H1 (cell line): ENCODE measurements at regions of chr5 and their contacts with region 1.

Region 1: DNA sequence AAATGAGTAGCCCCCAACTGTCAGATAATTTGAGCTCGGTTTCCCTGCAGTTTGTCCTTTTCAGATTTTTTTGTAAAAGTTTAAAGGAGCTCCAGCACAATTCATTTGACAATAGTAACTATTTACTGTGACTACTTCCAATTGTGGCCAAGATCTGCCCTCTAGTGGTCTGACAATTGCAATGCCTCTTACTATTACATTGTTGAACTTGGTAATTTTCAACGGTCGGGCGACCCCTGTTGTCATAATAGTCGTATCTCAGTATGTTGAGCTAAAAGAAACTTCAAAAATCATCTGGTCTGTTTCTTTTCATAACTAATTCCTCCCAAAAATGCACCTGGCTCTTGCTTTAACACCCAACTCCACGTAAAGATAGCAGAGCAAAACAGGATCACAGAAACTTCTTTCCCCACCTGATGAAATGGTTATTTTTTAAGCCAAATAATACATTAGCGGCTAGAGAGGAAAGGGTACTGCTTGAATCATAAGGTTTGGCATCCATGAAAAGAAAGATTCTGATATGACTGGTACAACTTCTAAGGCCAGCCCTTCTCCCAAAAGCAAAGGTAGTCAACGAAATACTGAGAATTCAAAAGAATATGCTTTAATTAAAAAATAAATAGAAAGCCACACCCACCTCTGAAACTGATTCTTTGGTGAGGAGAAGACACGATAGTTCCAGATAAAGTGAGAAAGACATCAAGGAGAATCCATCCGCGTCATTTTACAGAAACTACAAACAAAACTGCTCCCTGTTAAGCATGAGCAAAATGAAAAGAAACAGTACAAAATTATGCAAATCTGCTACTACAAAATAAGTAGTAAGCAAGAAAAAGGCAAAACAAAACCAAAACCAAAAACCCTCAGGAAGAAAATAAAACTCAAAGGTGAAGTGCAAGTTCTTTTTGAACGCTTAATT is 76.9 kb upstream of the HTR4 start:
- DNase-seq: peak; percentile 34 to 54
- H3K4me3 ChIP-seq: no peak overlapping the region
- H3K27ac ChIP-seq: no peak overlapping the region
- H3K4me1 ChIP-seq: no peaks in the 10 kb centered on the region
- H3K27me3 ChIP-seq: no peaks in the 10 kb centered on the region
- CTCF ChIP-seq: peak in 2 of 3 experiments; percentile 92 to 98; a peak in 3 of 4 replicates
- EP300 ChIP-seq: no peak
- POLR2A ChIP-seq: no peak
- RAD21 ChIP-seq: peak; percentile 94 to 95

Region 2: DNA sequence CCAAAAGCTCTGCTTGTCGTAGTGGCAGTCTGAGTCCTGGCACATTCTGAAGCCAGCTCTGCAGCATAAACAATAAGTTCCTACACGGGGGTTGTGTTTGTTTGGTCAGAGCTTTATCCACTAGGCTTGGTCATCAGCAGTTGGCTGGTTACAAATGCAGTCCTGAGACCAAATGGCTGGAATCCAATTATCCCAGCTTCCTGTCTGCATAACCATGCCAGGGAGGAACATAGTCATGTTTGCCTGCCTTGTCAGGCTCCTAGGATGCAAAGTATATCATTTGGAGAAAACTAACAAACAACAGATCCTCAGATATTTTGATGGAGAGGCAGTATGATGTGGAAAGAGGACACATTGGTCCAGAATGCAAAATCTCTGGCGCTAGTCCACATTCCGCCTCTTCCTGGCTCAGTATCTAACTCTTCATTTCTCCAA is 261.7 kb before region 1 on chr5:
- CTCF ChIA-PET with region 1: interaction called, 14 read pairs
- POLR2A ChIA-PET with region 1: no interaction called
- DNase-seq: no peak
- H3K4me3 ChIP-seq: no peak overlapping the region
- H3K27ac ChIP-seq: no peak overlapping the region
- H3K4me1 ChIP-seq: no peaks in the 10 kb centered on the region
- H3K27me3 ChIP-seq: no peaks in the 10 kb centered on the region
- CTCF ChIP-seq: no peak
- EP300 ChIP-seq: no peak
- POLR2A ChIP-seq: no peak
- RAD21 ChIP-seq: no peak

Region 3: DNA sequence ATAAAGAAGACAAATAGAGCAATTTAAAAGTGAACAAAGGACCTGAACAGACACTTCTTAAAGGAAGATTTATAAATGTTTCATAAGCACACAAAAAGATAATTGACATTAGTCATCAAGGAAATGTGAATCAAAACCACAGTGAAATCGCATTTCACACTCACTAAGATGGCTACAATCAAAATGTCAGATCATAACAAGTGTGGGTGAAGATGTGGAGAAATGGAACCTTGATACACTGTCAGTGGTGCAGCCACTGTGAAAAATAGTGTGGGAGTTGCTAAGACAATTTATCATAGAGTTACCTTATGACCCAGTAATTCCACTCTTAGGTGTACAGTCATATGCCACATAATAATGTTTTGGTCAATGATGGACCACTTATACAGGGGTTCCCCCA is 22.3 kb before region 1 on chr5:
- CTCF ChIA-PET with region 1: interaction called, 23 read pairs
- POLR2A ChIA-PET with region 1: no interaction called
- DNase-seq: no peak
- H3K4me3 ChIP-seq: no peak overlapping the region
- H3K27ac ChIP-seq: no peak overlapping the region
- H3K4me1 ChIP-seq: no peaks in the 10 kb centered on the region
- H3K27me3 ChIP-seq: no peaks in the 10 kb centered on the region
- CTCF ChIP-seq: no peak
- EP300 ChIP-seq: no peak
- POLR2A ChIP-seq: no peak
- RAD21 ChIP-seq: no peak

Region 4: GRCh38 chr5:148844433-148845280 is 113.5 kb after region 1 on chr5:
- CTCF ChIA-PET with region 1: no interaction called
- POLR2A ChIA-PET with region 1: no interaction called
- DNase-seq: no peak
- H3K4me3 ChIP-seq: no peak overlapping the region
- H3K27ac ChIP-seq: no peak overlapping the region
- H3K4me1 ChIP-seq: no peaks in the 10 kb centered on the region
- H3K27me3 ChIP-seq: no peaks in the 10 kb centered on the region
- CTCF ChIP-seq: 0 out of 4 replicates have a peak, but pooled peaks of 1 of the 3 experiments have one; percentile 3
- EP300 ChIP-seq: no peak
- POLR2A ChIP-seq: no peak
- RAD21 ChIP-seq: 0 out of 4 replicates have a peak, but pooled peaks of 1 of the 2 experiments have one; percentile 3

Region 5: DNA sequence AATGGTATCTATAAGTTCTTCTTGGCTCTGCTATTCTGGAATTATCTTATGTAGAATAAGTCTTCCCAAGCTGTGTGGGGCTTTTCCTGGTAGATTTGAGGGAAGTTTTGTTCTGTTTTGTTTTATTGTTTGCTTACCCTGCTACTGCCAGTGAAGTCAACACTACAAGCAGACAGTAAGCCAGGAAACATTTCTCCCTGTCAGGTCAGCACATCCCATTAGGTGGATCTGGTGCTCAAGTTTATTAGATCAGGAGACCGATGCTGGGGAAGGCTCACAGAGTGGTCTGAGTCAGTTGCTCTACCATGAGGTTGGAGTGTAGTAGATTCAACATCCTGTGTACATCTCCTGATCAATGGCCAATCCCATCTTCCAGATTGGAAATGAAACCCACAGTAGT is 174.3 kb after region 1 on chr5:
- CTCF ChIA-PET with region 1: no interaction called
- POLR2A ChIA-PET with region 1: no interaction called
- DNase-seq: no peak
- H3K4me3 ChIP-seq: no peak overlapping the region
- H3K27ac ChIP-seq: no peak overlapping the region
- H3K4me1 ChIP-seq: peaks cover 0 to under 1% (median 0%) of the 10 kb centered on the region in 4 experiments; a peak in 1 of 7 replicates
- H3K27me3 ChIP-seq: no peaks in the 10 kb centered on the region
- CTCF ChIP-seq: no peak
- EP300 ChIP-seq: no peak
- POLR2A ChIP-seq: no peak
- RAD21 ChIP-seq: no peak

Region 6: GRCh38 chr5:148957591-148958202 is 226.5 kb after region 1 on chr5:
- CTCF ChIA-PET with region 1: interaction called, 433 read pairs
- POLR2A ChIA-PET with region 1: no interaction called
- DNase-seq: peak in 1 of 2 experiments; percentile 85
- H3K4me3 ChIP-seq: no peak overlapping the region
- H3K27ac ChIP-seq: no peak overlapping the region
- H3K4me1 ChIP-seq: peaks cover 3 to 6% (median 5%) of the 10 kb centered on the region in 4 experiments; a peak in 6 of 7 replicates
- H3K27me3 ChIP-seq: no peaks in the 10 kb centered on the region
- CTCF ChIP-seq: peak; percentile 73 to 87 (median 86)
- EP300 ChIP-seq: no peak
- POLR2A ChIP-seq: no peak
- RAD21 ChIP-seq: peak; percentile 91 to 96

Region 7: GRCh38 chr5:149011074-149011476 is 279.9 kb after region 1 on chr5:
- CTCF ChIA-PET with region 1: interaction called, 16 read pairs
- POLR2A ChIA-PET with region 1: no interaction called
- DNase-seq: no peak
- H3K4me3 ChIP-seq: no peak overlapping the region
- H3K27ac ChIP-seq: no peak overlapping the region
- H3K4me1 ChIP-seq: no peaks in the 10 kb centered on the region
- H3K27me3 ChIP-seq: no peaks in the 10 kb centered on the region
- CTCF ChIP-seq: no peak
- EP300 ChIP-seq: no peak
- POLR2A ChIP-seq: no peak
- RAD21 ChIP-seq: no peak

Region 8: DNA sequence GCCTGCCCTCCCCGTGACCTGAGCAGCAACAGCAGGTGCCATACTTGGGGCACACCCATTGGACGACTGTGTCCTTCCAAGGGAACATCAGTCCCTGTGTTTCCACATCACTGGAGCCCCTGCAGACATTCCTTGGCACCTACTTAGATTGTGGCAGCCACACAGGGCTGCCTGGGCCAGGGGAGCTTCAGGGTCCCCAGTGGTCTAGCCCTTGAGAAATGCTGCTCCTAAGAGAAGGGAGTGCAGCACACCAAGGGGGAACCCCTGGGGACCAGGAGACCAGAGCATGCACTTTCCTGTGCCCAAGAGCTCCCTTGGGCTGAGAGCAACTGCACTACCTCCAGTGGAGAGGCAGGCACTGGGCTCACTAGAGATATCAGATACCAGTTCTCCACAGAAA is 389.9 kb after region 1 on chr5:
- CTCF ChIA-PET with region 1: interaction called, 93 read pairs
- POLR2A ChIA-PET with region 1: no interaction called
- DNase-seq: no peak
- H3K4me3 ChIP-seq: no peak overlapping the region
- H3K27ac ChIP-seq: no peak overlapping the region
- H3K4me1 ChIP-seq: peaks cover 0 to 5% (median 0%) of the 10 kb centered on the region in 4 experiments; a peak in 2 of 7 replicates
- H3K27me3 ChIP-seq: no peaks in the 10 kb centered on the region
- CTCF ChIP-seq: no peak
- EP300 ChIP-seq: no peak
- POLR2A ChIP-seq: no peak
- RAD21 ChIP-seq: no peak